ENCODE measurements at regions of chr2 and their contacts with region 1.

Region 1: GRCh38 chr2:218852911-218853667 is 6.5 kb upstream of the WNT6 start:
- DNase-seq: peak; percentile 83
- ATAC-seq: peak; percentile 80
- H3K4me3 Mint-ChIP-seq: no peak overlapping the region
- H3K27ac Mint-ChIP-seq: no peak overlapping the region
- H3K4me1 Mint-ChIP-seq: peaks cover 37% of the 10 kb centered on the region
- H3K27me3 Mint-ChIP-seq: peaks cover 60% of the 10 kb centered on the region
- CTCF ChIP-seq: peak; percentile 87

Region 2: DNA sequence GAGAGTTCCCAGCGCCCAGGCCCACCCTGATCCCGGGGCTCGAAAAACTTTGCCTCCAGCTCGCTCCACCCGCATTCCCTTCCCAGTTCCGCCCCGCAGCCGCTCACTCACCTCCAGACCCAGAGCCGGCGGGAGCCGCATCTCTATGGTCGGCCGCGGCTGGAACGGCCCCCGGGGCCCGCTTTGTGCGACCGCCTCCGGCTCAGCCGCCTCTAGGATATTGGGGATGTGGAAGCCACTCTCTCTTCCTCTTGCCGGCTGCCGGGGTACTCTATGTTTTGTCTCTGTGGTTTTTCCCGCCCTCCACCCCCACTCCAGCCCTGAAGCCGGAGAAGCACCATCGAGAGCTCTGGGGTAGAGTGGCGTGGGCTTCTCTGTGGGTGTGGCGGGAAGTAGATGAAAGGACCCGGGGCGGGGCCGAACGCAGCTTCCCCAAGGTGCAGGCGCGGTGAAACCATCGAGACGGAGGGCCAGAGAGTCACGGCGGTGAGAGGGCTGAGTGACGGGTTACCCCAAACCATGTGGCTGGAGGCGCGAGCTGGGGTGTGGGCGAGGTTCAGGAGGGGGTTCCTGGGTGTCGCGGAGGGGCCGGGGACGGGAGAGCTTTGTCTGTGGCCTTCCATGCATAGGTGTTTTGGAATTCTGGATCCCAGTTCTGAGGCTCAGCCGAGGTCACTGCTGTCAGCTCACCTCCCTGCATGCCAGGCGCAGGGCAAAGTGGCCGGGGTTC is 193.7 kb before region 1 on chr2 and contains the starts of genes BCS1L and ZNF142:
- CTCF ChIA-PET with region 1: interaction called, 26 read pairs
- POLR2A ChIA-PET with region 1: interaction called, 3 read pairs
- DNase-seq: peak; percentile 96
- ATAC-seq: peak; percentile 91
- H3K4me3 Mint-ChIP-seq: peak within 1 kb of the TSS; percentile 93
- H3K27ac Mint-ChIP-seq: peak within 1 kb of the TSS; percentile 90
- H3K4me1 Mint-ChIP-seq: peaks cover 9% of the 10 kb centered on the region
- H3K27me3 Mint-ChIP-seq: no peaks in the 10 kb centered on the region
- CTCF ChIP-seq: no peak
- total RNA-seq, gene BCS1L: 31.4 to 35.4 TPM (median 32.7 TPM) in 3 replicates
- total RNA-seq, gene ZNF142: 25.1 to 33.5 TPM (median 28.7 TPM) in 3 replicates

Region 3: GRCh38 chr2:218727502-218728165 is 125.5 kb before region 1 on chr2:
- CTCF ChIA-PET with region 1: interaction called, 54 read pairs
- POLR2A ChIA-PET with region 1: no interaction called
- DNase-seq: no peak
- ATAC-seq: no peak
- H3K4me3 Mint-ChIP-seq: no peak overlapping the region
- H3K27ac Mint-ChIP-seq: no peak overlapping the region
- H3K4me1 Mint-ChIP-seq: peaks cover 22% of the 10 kb centered on the region
- H3K27me3 Mint-ChIP-seq: no peaks in the 10 kb centered on the region
- CTCF ChIP-seq: no peak

Region 4: GRCh38 chr2:218781691-218782527 is 71.2 kb before region 1 on chr2 and contains the start of gene CYP27A1:
- CTCF ChIA-PET with region 1: interaction called, 18 read pairs
- POLR2A ChIA-PET with region 1: no interaction called
- DNase-seq: peak; percentile 44
- ATAC-seq: peak; percentile 87
- H3K4me3 Mint-ChIP-seq: peak within 1 kb of the TSS; percentile 86
- H3K27ac Mint-ChIP-seq: no peak within 1 kb of the TSS
- H3K4me1 Mint-ChIP-seq: peaks cover 17% of the 10 kb centered on the region
- H3K27me3 Mint-ChIP-seq: peaks cover 58% of the 10 kb centered on the region
- CTCF ChIP-seq: no peak
- total RNA-seq, gene CYP27A1: 5.6 to 9.3 TPM (median 8.1 TPM) in 3 replicates